ENCODE measurements at regions of chr10 and their contacts with region 1.

Region 1: GRCh38 chr10:7410862-7411670 is at the start of gene SFMBT2:
- DNase-seq: peak in 40 of 42 donors; percentile 43 to 88 (median 76)

Region 2: DNA sequence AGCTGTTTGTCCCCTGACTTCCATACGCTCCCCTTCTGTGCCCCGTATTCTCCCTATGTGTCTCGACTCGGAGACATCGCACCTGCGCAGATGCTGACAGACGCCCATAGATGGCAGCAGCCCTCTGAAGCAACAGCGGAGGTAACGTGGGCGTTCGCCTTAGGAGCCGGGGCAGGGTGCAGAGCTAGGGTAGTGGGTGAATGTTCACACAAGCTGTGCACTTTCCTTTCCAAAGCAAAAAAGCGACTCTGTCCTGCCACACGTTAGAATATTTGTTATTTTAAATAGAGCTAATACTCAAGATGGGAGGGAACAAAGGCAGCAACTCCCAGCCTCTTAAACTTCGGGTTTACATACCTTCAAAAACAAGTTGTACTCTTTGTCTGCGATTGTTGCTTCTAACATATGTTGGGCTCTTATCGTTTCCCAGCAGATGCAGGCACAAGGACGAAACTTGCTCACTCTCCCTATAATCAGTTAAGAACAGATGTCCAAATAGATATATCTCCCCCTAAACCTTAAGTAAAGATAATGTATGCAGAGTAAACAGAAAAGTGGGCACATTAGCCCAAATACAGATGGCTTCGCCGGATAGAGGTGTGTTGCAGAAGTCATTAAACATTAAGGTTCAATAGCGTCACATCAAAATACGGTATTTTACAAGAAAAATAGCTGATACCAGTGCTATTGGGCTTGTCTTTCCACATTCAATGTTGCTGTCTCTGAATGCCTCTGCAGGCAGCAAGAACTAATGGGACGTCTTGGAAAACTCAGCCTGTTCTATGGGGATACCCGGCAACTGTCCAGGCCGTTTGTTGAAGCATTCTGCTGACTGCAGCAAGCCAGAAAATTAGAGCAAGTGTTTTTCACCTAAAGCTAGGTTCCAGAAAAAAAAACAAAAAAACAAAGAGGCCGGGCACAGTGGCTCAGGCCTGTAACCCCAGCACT is 490.7 kb before region 1 on chr10:
- intact Hi-C with region 1: loop called (anchors 5 kb)
- DNase-seq: peak; percentile 74 to 94 (median 88)

Region 3: GRCh38 chr10:7121154-7121810 is 289.8 kb before region 1 on chr10:
- intact Hi-C with region 1: loop called (anchors 10 kb)
- DNase-seq: peak in 41 of 42 donors; percentile 33 to 88 (median 69)

Region 4: DNA sequence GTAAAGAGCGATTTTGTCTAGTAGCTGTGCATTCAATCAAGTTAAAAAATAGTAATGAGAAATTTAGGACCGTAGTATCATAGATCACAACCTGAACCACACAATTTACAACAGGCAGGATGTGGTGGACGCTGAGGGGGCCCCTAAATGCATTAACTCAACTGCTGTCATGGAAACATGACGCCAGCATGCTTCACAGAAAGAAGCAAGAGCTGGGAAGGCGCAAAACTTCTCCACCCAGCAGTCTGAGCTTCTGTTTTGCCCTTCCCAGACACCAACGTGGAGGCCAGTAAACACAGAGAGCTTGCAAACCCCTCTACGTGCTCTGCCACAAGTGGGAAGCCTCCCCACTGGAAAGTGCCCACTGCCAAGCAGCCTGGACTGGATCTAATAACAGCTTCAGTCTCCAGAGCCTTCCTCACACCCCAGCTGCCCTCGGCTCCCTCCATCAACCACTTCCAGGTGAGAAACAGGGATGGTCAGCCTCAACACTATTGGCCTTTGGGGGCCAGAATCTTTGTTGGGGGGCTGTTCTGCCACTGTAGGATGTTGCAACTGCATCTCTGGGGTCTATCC is 152.0 kb before region 1 on chr10:
- intact Hi-C with region 1: loop called (anchors 2 kb)
- DNase-seq: peak in 2 of 42 donors; percentile 18 to 24

Measured in head of caudate nucleus (tissue), 42 donors.